ENCODE measurements at regions of chr1 and their contacts with region 1.

Region 1: DNA sequence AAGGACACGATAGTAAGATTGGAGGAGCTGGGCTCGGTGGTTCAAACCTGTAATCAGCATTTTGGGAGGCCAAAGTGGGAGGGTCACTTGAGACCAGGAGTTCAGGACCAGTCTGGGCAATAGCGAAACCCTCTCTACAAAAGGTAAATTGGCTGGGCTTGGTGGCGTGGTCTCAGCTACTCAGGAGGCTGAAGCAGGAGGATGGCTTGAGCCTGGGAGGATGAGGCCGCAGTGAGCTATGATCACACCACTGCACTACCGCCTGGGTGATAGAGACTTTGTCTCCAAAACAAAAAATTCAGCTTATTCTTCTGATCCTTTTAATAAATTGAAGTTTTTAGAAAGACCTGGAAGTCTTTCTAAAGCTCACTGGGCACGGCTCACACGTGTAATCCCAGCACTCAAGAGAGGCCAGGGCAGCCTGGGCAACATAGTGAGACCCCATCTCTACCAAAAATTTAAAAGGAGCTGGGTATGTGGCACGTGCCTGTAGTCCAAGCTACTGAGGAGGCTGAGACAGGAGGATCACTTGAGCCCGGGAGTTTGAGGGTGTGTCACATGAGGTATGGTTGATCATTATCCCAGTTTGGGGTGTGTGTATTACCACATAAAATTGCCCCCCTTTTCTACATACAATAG is 15.3 kb downstream of the MASP2 start:
- DNase-seq: peak in 1 of 2 experiments; percentile 40
- H3K4me3 ChIP-seq: no peak overlapping the region
- H3K27ac ChIP-seq: no peak overlapping the region
- H3K4me1 ChIP-seq: peaks cover 0 to 4% (median 0%) of the 10 kb centered on the region in 4 experiments; a peak in 2 of 7 replicates
- H3K27me3 ChIP-seq: no peaks in the 10 kb centered on the region
- CTCF ChIP-seq: no peak
- EP300 ChIP-seq: no peak
- POLR2A ChIP-seq: no peak
- RAD21 ChIP-seq: no peak

Region 2: DNA sequence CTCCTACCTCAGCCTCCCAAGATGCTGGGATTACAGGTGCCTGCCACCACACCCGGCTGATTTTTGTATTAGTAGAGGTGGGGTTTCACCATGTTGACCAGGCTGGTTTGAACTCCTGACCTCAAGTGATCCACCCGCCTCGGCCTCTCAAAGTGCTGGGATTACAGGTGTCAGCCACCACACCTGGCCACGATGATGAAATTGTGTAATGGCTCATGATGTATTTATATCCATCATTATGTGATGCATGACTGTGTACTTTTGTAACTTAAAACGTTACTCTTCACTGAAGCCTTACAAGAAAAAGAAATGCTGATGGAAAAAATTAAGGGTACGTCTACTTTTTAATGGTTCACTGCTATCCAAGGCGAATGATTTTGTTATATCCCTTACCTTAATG is 11.8 kb before region 1 on chr1:
- CTCF ChIA-PET with region 1: interaction called, 4 read pairs
- POLR2A ChIA-PET with region 1: interaction called, 20 read pairs
- DNase-seq: no peak
- H3K4me3 ChIP-seq: no peak overlapping the region
- H3K27ac ChIP-seq: no peak overlapping the region
- H3K4me1 ChIP-seq: no peaks in the 10 kb centered on the region; a peak in 1 of 7 replicates
- H3K27me3 ChIP-seq: no peaks in the 10 kb centered on the region
- CTCF ChIP-seq: no peak
- EP300 ChIP-seq: no peak
- POLR2A ChIP-seq: no peak
- RAD21 ChIP-seq: no peak